Lower leg skin (tissue), 4 donors: ENCODE measurements at regions of chr3 and their contacts with region 1.

Region 1: DNA sequence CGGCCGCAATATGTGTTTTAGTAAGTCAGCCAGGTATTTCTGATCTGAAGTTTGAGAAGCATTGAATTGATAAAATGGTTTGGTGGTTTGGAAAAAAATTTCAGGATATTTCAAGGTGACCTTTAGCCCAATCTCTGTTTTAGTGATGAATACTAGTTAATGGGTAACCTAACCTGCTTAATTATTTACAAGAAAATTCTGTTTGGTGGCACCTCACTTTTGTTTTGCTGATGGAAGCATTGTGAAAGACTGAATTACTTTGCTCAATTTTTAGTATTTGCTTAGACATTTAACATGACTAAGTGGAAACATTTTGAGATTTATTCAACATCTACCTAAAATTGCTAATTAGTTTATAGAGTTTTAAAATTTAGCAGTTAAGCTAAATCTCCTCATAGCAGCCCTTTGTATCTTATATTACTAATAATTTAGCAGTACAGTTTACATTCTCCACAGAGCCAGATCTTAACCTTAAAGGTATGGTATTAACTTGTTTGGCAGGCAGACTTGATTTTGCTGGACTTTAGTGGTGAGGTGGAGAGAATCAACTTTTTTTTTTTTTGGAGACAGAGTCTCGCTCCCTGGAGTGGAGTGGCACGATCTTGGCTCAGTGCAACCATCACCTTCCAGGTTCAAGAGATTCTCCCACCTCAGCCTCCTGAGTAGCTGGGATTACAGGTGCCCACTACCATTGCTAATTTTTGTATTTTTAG is 35.4 kb downstream of the GRAMD1C start:
- DNase-seq: no peak
- H3K4me3 ChIP-seq: no peak overlapping the region
- CTCF ChIP-seq: no peak
- POLR2A ChIP-seq: no peak

Region 2: DNA sequence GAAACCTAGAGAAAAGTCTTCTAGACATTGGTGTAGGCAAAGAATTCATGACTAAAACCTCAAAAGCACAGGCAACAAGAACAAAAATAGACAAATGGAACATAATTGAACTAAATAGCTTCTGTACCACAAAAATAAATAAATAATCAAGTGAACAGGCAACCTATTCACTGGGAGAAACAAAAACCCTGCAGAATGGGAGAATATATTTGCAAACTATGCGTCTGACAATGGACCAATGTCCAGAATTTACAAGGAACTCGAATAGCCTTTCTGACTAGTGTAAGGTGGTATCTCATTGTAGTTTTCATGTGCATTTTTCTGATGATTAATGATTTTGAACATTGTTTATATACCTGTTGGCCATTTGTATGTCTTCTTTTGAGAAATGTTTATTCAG is 1703.9 kb before region 1 on chr3:
- intact Hi-C with region 1: loop called (anchors 5 kb)
- DNase-seq: no peak
- H3K4me3 ChIP-seq: no peak overlapping the region
- CTCF ChIP-seq: no peak
- POLR2A ChIP-seq: no peak

Region 3: GRCh38 chr3:114308830-114309229 is 434.9 kb after region 1 on chr3:
- intact Hi-C with region 1: no loop called
- DNase-seq: no peak
- H3K4me3 ChIP-seq: no peak overlapping the region
- CTCF ChIP-seq: no peak
- POLR2A ChIP-seq: no peak

Region 4: GRCh38 chr3:114362815-114363214 is 488.8 kb after region 1 on chr3:
- intact Hi-C with region 1: no loop called
- DNase-seq: no peak
- H3K4me3 ChIP-seq: no peak overlapping the region
- CTCF ChIP-seq: no peak
- POLR2A ChIP-seq: no peak